AG04450 (cell line): ENCODE measurements at regions of chr10 and their contacts with region 1.

Region 1: DNA sequence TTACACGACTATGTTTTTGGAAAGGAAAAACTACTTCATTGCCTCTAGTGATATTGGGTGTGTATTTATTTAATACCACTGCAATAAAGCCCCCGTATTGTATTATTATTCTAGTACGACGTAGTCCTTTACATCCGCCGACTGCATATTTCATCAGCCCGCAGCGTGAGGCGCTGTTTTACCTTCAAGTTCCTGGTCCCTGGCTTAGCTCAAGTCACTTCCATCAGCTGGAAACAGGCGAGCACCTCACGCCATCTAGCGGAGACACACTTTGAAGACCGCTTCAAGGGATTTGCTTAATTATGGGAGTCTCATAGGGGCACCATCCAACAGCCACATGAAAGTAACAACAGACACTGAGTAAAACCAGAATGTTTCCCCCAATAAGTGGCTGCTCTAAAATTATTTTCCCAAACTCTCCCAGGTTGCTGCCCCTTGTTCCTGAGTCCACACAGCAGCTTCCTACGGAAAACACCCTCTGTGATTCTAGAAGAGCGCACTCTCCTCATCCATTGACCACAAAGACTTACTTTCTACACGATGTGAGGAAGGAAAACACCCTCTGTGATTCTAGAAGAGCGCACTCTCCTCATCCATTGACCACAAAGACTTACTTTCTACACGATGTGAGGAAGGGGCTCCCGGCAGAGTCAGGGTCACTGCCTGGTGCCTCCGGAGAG is 15.7 kb upstream of the ITIH2 start:
- DNase-seq: peak; percentile 65
- H3K4me3 ChIP-seq: no peak overlapping the region
- H3K27ac ChIP-seq: no peak overlapping the region
- H3K27me3 ChIP-seq: no peaks in the 10 kb centered on the region
- CTCF ChIP-seq: peak; percentile 87

Region 2: DNA sequence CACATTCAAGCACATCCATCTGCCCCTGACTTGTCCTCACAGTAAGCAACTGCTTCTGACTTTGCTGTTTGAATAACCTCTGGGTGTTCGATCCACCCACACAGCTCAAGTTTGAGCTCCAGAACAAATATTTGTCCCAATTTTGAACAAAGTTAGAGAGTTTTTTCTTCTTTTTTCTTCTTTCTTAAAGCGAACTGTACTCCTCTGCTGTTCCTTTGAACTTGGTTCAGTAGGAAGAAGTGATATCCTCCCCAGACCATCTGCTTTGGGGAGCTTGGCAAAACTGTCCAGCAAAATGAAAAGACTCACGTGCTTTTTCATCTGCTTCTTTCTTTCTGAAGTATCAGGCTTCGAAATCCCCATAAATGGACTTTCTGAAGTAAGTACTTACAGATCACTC is 15.8 kb after region 1 on chr10 and contains the start of gene ITIH2:
- CTCF ChIA-PET with region 1: interaction called, 19 read pairs
- POLR2A ChIA-PET with region 1: no interaction called
- DNase-seq: no peak
- H3K4me3 ChIP-seq: no peak within 1 kb of the TSS
- H3K27ac ChIP-seq: no peak within 1 kb of the TSS
- H3K27me3 ChIP-seq: peaks cover 2% of the 10 kb centered on the region
- CTCF ChIP-seq: no peak
- polyA plus RNA-seq, gene ITIH2: not detected in 2 replicates